Tibial artery (tissue), 4 donors: ENCODE measurements at regions of chr12 and their contacts with region 1.

Region 1: GRCh38 chr12:3073438-3074250 is 3.5 kb upstream of the TSPAN9 start:
- DNase-seq: peak; percentile 79 to 90
- H3K4me3 ChIP-seq: no peak overlapping the region
- H3K27ac ChIP-seq: peak overlapping the region; percentile 44 to 46
- H3K4me1 ChIP-seq: peaks cover 0 to 25% (median 21%) of the 10 kb centered on the region in 4 donors
- H3K27me3 ChIP-seq: no peaks in the 10 kb centered on the region
- CTCF ChIP-seq: peak; percentile 93 to 97

Region 2: GRCh38 chr12:3129301-3130056 is 55.8 kb after region 1 on chr12:
- intact Hi-C with region 1: loop called (anchors 5 kb)
- DNase-seq: no peak
- H3K4me3 ChIP-seq: no peak overlapping the region
- H3K27ac ChIP-seq: peak overlapping the region; percentile 38 to 44
- H3K4me1 ChIP-seq: peaks cover 0 to 36% (median 24%) of the 10 kb centered on the region in 4 donors
- H3K27me3 ChIP-seq: no peaks in the 10 kb centered on the region
- CTCF ChIP-seq: no peak

Region 3: GRCh38 chr12:3275171-3276041 is 201.8 kb after region 1 on chr12:
- intact Hi-C with region 1: loop called (anchors 5 kb)
- DNase-seq: peak; percentile 78 to 84
- H3K4me3 ChIP-seq: no peak overlapping the region
- H3K27ac ChIP-seq: no peak overlapping the region
- H3K4me1 ChIP-seq: peaks cover 0 to 19% (median 16%) of the 10 kb centered on the region in 4 donors
- H3K27me3 ChIP-seq: no peaks in the 10 kb centered on the region
- CTCF ChIP-seq: peak; percentile 96 to 98